Cardiac septum (tissue), 1 donor: ENCODE measurements at regions of chr2 and their contacts with region 1.

Region 1: DNA sequence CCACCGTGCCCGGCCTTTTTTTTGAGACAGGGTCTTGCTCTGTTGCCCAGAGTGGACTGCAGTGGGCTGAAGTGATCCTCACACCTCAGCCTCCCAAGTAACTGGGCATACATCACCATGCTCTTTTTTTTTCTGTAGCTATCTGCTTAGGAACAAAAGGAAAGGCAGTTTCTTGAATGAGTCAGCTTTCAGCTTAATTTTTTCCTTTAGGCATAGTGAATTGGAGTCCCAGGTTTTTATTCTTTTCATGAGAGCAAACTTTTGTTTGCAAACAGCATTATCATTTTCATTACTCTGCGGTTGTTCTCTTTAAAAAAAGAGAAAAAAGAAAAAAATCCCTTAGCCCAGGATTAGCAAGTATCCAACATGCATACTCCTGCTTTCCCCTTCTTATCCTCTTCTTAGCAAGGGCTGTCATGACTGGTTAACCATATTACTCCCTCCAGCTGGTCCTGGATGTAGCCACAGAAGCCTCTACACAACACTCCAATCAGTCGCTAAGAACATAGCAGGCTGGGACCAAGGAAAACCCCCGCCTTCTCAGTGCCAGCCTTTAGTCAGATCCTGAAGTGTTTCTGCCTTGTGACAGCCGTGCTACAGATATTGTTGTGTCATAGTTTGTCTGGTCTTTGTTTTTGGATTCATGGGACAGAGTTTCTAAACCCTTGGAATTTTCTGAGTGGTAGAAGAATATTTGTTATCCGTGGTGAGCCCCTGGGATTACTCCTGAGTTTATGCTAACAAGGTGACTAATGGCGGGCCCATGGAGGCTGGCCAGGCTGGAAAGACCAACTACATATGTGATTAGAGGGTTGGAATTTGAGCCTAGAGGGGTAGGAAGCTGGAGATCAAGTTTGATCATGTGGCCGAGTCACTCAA is 23.3 kb upstream of the ST3GAL5 start:
- DNase-seq: no peak

Region 2: GRCh38 chr2:86035883-86036668 is 124.0 kb after region 1 on chr2:
- intact Hi-C with region 1: loop called (anchors 5 kb)
- DNase-seq: peak; percentile 92